Psoas muscle (tissue), 8 donors: ENCODE measurements at regions of chr9 and their contacts with region 1.

Region 1: DNA sequence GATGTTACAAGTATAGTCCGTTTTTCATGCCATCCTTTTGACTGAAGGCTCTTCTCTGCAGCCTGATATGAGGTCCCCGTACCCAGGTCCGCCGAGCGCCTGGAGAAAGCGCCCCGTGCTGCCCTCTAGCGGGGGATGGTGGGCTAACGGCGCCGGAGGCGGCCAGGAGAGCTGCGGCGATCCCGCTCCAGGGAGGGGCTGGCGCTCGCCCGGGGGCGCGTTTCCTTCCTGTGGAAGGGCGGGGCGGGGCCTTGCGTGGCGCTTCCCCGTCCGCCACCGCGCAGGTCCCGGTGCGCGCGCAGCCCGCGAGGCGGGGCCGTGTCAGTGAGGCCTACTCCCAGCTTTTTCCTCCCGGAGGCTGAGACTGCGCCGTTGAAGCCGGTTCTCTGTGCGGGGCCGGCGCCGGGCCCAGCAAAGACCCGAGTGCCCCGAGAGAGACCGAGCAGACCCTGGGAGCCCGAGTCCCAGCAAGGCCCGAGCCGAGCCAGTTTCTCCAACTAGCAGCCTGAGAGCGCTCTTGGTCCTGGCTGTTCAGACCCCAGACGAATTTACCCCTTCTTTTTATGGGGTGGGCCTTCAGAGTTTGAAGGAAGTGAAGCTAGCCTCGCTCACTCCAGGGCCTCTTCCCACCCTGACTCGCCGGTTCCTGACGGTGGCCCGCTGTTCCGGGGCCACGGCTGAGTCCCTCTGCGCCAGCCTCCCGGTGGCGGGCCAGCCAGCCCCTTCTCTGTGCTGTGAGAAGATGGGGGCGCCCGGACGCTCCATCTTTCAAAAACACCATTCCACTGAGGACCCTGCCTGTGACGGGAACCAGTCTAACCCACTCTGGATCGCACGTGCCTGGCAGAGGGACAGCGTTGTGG is 9.7 kb upstream of the PHF2 start:
- DNase-seq: peak; percentile 99
- ATAC-seq: peak; percentile 97 to 99 (median 98)
- H3K4me3 ChIP-seq: peak overlapping the region; percentile 74
- H3K27ac ChIP-seq: peak overlapping the region; percentile 96
- H3K4me1 ChIP-seq: peaks cover 8% of the 10 kb centered on the region
- H3K27me3 ChIP-seq: no peaks in the 10 kb centered on the region
- CTCF ChIP-seq: peak; percentile 96

Region 2: DNA sequence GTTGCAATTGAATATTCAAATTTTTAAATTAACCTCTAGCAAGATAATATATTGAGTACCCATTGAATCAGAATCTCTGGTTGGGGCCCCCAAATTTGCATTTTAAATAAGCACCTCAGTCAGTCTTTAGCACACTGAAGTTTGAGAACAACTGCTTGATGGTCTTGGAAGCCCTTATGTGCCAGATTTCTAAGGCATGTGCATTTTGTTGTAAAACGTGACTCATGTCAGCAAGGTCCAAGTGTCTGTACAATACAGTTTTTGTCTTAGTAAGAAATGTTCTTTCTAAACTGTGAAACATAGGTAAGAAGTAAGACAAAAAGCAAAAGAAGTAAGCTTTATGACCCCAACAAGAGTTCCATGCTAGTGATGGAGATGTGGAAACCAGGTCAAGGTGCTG is 49.3 kb before region 1 on chr9:
- intact Hi-C with region 1: loop called in 1 of 2 experiments (anchors 10 kb)
- DNase-seq: no peak
- ATAC-seq: no peak
- H3K4me3 ChIP-seq: no peak overlapping the region
- H3K27ac ChIP-seq: no peak overlapping the region
- H3K4me1 ChIP-seq: peaks cover 23% of the 10 kb centered on the region
- H3K27me3 ChIP-seq: no peaks in the 10 kb centered on the region
- CTCF ChIP-seq: no peak